OCI-LY7 (cell line): ENCODE measurements at regions of chr1 and their contacts with region 1.

Region 1: DNA sequence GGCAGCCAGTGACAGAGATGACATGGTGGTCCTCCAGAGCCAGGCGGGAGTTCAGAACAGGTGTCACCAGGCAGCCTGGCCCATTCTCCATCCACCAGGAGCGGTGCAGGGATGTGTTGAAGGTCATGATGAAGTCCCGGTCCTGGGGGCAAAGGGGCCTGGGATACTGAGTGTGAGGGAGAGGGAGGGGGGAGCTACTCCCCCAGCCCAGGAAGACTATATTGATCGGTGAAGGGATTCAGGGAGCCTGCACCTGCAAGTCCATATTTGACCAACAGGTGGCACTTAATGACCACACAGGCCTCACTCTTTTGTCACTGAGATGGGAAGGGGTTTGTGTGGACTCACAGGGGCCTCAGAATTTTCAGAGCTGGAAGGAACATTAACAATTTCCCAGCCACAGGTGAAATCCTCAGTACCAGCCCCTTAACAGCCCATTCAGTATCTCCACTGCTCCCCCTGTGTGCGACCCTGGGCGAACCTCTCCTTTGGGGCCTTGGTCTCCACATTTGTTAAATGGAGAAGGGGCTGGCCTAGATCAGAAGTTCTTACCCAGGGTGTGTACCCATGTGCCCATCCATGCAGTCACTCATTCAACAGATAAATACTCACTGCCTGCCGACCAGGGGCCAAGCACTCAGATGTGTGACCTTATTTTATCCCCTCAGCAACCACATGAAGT is 55.7 kb downstream of the NKAIN1 start:
- DNase-seq: peak; percentile 64
- H3K4me3 ChIP-seq: no peak overlapping the region
- H3K27ac ChIP-seq: no peak overlapping the region
- H3K4me1 ChIP-seq: peaks cover 6% of the 10 kb centered on the region
- CTCF ChIP-seq: peak; percentile 92

Region 2: DNA sequence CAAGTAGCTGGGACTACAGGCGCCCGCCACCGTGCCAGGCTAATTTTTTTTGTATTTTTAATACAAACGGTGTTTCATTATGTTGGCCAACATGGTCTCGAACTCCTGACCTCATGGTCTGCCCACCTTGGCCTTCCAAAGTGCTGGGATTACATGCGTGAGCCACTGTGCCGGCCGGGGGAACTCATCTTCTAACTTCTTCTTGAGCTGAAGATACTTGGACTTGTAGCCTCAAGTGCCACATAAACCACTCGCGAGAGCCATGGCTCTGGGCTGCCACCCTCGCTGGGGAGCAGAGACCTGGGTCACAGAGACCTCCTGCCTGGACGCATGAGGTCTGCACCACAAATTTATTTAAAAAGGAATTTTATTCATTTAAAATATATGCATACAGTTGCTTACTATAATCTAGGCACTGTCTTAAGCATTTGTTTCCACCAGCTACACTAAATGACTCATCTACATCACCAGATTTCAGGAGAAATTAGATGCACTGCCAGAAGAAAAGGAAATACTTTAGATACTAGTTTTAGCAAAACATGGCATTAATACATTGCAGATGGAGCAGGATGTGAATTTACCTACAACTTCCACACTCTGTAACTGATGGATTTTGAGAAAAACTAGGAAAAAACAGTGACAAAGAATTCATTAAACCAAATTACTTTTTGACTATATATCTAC is 88.6 kb before region 1 on chr1:
- CTCF ChIA-PET with region 1: no interaction called
- POLR2A ChIA-PET with region 1: no interaction called
- intact Hi-C with region 1: no loop called
- DNase-seq: no peak
- H3K4me3 ChIP-seq: no peak overlapping the region
- H3K27ac ChIP-seq: no peak overlapping the region
- H3K4me1 ChIP-seq: no peaks in the 10 kb centered on the region
- CTCF ChIP-seq: no peak

Region 3: DNA sequence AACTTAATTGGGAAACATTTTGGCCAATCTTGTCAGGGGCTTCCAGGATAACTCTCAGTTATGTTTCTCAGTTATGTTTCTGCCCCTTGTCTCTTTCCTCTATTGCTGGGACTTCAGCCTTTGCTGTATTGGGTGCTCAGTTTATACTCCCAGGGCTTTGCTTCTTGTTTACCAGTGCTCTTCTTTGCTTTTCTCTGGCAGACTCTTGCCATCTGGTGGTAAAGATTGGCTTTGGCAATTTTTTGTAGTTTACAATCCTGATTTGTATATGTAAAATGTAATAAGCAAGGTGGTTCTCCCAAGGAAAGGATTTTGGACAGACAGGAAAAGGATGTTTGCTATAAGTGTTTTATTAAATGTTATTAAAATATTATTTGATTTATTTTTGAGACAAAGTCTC is 151.0 kb after region 1 on chr1:
- CTCF ChIA-PET with region 1: no interaction called
- POLR2A ChIA-PET with region 1: no interaction called
- intact Hi-C with region 1: loop called (anchors 1 kb)
- DNase-seq: peak; percentile 54
- H3K4me3 ChIP-seq: no peak overlapping the region
- H3K27ac ChIP-seq: no peak overlapping the region
- H3K4me1 ChIP-seq: peaks cover 7% of the 10 kb centered on the region
- CTCF ChIP-seq: peak; percentile 79

Region 4: DNA sequence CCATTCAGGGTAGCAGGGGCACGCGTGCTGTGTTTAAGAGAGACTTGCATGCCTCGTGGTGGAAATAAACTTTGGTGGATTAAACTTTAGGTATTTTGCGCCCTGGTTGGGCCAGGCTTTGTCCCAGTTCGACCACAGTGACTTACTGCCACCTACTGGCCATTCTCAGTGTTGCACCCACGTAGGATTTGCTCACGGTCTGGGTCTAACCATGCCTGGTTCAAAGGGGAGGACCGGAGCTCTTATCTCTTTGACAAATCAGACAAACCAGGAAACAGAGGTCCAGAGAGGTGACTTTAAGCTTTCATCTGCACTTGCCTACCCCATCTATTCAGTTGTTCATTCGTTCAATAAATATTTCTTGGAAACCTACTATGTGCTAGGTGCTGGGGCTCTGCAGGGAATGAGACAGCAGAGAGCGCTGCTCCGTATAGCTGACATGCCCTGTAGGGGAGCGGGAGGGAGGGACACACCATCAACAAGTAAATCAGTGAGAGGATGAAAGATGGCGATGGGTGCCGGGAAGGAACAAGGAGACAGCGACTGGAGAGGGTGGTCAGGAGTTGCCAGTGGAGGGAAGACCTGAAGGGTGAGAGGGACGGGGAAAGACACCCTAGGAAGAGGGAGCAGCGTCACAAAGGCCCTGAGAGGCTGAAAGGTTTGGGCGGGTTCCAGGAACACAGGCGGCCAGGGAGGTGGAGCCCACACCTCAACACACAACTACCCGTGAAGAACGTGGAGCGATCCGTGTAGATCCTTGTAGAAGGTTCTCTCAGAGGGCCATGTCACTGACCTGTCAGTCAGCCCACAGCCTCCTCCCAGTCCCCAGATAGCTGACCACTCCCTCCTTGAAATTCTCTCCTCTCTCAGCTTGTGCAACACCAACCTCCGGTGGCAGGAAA is 365.1 kb after region 1 on chr1:
- CTCF ChIA-PET with region 1: interaction called, 4 read pairs
- POLR2A ChIA-PET with region 1: no interaction called
- intact Hi-C with region 1: loop called (anchors 1 kb)
- DNase-seq: peak; percentile 87
- H3K4me3 ChIP-seq: peak overlapping the region; percentile 2
- H3K27ac ChIP-seq: no peak overlapping the region
- H3K4me1 ChIP-seq: peaks cover 10% of the 10 kb centered on the region
- CTCF ChIP-seq: peak; percentile 99